SK-N-SH (cell line): ENCODE measurements at regions of chr3 and their contacts with region 1.

Region 1: DNA sequence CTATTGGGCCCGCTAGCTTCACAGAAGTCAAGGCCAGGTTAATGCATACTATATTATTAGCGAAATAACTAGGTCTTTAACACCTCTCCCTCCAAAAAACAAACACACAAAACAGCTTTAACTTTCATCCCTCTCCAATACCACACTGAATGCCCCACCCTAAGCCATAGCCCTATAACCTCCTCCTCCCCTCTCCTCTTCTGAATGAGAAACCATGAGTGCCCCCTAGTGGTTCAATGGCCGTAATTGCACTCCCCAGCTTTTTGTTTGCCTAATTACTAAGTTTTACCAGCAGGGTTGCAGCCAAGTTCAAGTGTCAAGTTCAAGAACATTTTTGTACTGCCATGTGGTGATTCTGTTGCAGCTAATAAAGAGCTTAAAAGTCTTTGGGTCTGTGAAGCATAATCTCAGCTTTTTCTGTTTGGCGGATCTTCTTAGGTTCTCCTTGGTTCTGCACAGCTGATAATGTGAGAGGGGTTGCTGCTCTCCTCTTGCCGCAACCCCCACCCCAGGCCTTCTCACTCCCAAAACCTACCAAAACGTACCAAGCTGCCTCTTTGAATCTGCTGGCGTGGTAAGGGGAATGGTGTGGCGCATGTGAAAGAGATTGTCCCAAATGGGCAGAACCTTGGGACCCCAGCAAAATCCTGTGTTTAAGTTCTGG is 57.9 kb downstream of the RPL22L1 start:
- DNase-seq: peak; percentile 77
- H3K4me3 ChIP-seq: no peak overlapping the region; a peak in 1 of 4 replicates
- H3K27ac ChIP-seq: peak overlapping the region in 1 of 2 experiments; percentile 19; a peak in 2 of 4 replicates
- H3K4me1 ChIP-seq: peaks cover 11 to 13% of the 10 kb centered on the region in 2 experiments
- H3K27me3 ChIP-seq: no peaks in the 10 kb centered on the region
- CTCF ChIP-seq: peak; percentile 96
- EP300 ChIP-seq: no peak
- RAD21 ChIP-seq: peak; percentile 96

Region 2: GRCh38 chr3:170405101-170405500 is 407.0 kb before region 1 on chr3:
- CTCF ChIA-PET with region 1: interaction called, 316 read pairs
- POLR2A ChIA-PET with region 1: no interaction called
- DNase-seq: no peak
- H3K4me3 ChIP-seq: no peak overlapping the region
- H3K27ac ChIP-seq: no peak overlapping the region
- H3K4me1 ChIP-seq: no peaks in the 10 kb centered on the region
- H3K27me3 ChIP-seq: no peaks in the 10 kb centered on the region
- CTCF ChIP-seq: no peak
- EP300 ChIP-seq: no peak
- RAD21 ChIP-seq: no peak

Region 3: DNA sequence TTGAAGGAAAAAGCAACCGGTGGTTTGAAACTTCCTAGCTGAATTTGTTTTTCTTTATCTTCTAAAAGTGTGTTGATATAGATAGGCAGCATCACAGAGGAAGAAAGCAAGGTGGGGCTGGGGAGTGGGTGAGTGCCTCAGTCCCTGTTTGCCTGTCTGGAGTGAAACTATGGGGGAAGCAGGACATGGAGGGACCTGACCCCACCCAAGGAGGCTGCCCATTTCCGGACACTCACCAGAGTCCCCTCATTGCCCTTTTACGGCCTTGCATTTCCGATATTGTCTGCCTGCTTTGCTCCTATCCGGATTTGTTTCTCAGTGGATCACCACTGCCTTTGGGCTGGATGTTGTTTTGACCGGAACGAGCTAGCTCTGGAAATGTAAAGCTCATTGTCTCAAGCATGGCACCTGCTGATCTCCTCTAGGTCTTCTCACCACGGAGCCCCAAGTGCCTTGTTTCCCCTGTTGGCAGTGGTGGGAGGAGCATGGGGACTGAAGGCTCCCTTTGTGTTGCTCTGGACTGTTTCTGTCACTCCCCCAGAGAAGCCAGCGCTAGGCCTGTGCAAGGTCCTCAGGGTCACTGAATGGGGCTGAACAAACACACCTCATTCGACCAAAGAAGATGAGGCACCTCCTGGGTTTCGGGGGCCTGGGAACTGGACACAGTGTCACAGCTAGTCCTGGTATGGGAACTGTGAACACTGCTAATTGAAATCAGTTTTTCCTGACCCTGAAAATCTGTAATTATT is 386.4 kb before region 1 on chr3:
- CTCF ChIA-PET with region 1: interaction called, 16 read pairs
- POLR2A ChIA-PET with region 1: no interaction called
- DNase-seq: peak; percentile 44
- H3K4me3 ChIP-seq: no peak overlapping the region
- H3K27ac ChIP-seq: peak overlapping the region in 1 of 2 experiments; percentile 48; a peak in 2 of 4 replicates
- H3K4me1 ChIP-seq: peaks cover 0 to 12% of the 10 kb centered on the region in 2 experiments; a peak in 3 of 4 replicates
- H3K27me3 ChIP-seq: no peaks in the 10 kb centered on the region
- CTCF ChIP-seq: no peak
- EP300 ChIP-seq: no peak
- RAD21 ChIP-seq: no peak

Region 4: GRCh38 chr3:170584585-170585007 is 227.5 kb before region 1 on chr3:
- CTCF ChIA-PET with region 1: interaction called, 15 read pairs
- POLR2A ChIA-PET with region 1: no interaction called
- DNase-seq: peak; percentile 42
- H3K4me3 ChIP-seq: peak overlapping the region; percentile 61 to 64
- H3K27ac ChIP-seq: no peak overlapping the region
- H3K4me1 ChIP-seq: peaks cover 0 to 11% of the 10 kb centered on the region in 2 experiments; a peak in 2 of 4 replicates
- H3K27me3 ChIP-seq: no peaks in the 10 kb centered on the region
- CTCF ChIP-seq: no peak
- EP300 ChIP-seq: no peak
- RAD21 ChIP-seq: no peak

Region 5: GRCh38 chr3:170829546-170830272 is 17.6 kb after region 1 on chr3:
- CTCF ChIA-PET with region 1: interaction called, 38 read pairs
- POLR2A ChIA-PET with region 1: no interaction called
- DNase-seq: no peak
- H3K4me3 ChIP-seq: no peak overlapping the region
- H3K27ac ChIP-seq: no peak overlapping the region
- H3K4me1 ChIP-seq: no peaks in the 10 kb centered on the region
- H3K27me3 ChIP-seq: no peaks in the 10 kb centered on the region
- CTCF ChIP-seq: no peak
- EP300 ChIP-seq: no peak
- RAD21 ChIP-seq: no peak

Region 6: DNA sequence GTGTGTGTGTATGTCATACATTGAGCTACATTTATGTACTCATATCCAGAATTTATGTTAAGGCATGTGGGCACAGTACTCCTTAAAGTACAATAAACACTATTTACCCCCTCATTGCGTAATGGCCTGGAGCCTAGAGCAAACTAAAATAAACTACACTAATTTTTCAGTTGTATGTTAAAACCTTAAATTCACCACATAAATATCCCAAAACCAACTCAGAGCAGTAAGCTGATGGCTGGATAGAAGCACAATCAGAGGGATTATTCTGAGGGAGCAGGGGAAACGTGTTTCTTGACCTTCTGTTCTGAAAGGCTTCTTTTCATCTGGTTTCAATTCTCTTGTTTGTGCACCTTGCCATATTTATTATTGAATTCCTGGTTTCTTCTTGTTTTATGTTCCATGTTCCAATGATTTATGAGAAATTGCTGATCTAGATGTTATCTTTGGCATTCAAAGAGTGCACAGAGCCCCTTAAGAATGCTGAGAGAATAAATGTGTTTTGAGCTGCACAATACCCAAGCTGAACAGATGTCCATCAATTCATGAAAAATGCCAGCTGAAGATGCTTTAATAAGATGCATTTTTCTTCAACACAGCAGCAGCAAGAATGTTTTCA is 28.3 kb after region 1 on chr3:
- CTCF ChIA-PET with region 1: interaction called, 25 read pairs
- POLR2A ChIA-PET with region 1: no interaction called
- DNase-seq: peak; percentile 10
- H3K4me3 ChIP-seq: no peak overlapping the region
- H3K27ac ChIP-seq: peak overlapping the region in 1 of 2 experiments; percentile 19; a peak in 1 of 4 replicates
- H3K4me1 ChIP-seq: peaks cover 0 to 1% of the 10 kb centered on the region in 2 experiments; a peak in 2 of 4 replicates
- H3K27me3 ChIP-seq: no peaks in the 10 kb centered on the region
- CTCF ChIP-seq: no peak
- EP300 ChIP-seq: peak; percentile 26 to 58; a peak in 3 of 4 replicates
- RAD21 ChIP-seq: no peak